HCT116 (cell line): ENCODE measurements at regions of chr15 and their contacts with region 1.

Region 1: DNA sequence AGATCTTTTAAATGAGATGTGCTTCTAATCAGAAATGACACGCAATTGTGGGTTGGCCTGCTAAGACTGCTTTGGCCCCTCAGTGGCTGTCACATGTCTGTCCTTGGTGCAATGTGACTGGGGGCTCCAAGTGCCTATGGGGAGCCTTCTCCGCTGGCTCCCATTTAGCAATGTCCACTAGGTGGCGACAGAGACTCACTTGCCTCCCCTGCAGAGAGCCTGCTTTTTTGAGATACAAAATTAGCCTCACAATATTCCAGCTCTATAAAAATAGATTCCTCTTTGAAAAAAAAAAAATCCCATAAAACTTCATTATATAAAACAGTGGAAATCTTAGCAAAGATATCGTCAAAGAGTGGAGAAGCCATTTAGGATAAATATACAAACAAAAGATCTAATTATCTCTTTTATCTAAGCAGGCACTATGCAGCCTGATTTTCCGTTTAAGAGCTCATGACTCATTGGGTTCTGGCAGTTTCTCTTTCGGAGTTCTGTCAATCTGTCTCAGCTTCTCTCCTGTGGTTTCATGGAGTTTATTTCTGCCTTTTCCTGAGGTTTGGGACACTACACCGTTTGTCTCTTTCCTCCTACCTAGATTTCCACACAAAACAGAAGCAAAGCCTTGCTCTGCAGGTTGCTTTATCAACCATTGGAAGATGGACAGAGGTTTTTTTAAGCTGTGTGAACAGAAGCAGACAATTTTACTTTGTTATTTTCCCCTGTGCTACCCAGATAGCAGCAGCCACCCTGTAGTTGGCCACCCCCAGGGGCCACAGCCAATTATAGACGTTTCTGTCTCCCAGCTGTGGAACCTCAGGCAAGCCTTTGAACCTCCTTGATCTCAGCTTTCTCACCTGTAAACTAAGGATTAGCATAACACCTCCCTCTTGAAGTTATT is 68.4 kb upstream of the TNFAIP8L3 start:
- DNase-seq: peak; percentile 33
- ATAC-seq: peak; percentile 96
- H3K4me3 ChIP-seq: no peak overlapping the region
- H3K27ac ChIP-seq: no peak overlapping the region
- H3K4me1 ChIP-seq: peaks cover 8% of the 10 kb centered on the region in 2 experiments
- H3K27me3 ChIP-seq: no peaks in the 10 kb centered on the region
- CTCF ChIP-seq: peak; percentile 82 to 96 (median 96)
- POLR2A ChIP-seq: no peak
- RAD21 ChIP-seq: peak; percentile 82

Region 2: DNA sequence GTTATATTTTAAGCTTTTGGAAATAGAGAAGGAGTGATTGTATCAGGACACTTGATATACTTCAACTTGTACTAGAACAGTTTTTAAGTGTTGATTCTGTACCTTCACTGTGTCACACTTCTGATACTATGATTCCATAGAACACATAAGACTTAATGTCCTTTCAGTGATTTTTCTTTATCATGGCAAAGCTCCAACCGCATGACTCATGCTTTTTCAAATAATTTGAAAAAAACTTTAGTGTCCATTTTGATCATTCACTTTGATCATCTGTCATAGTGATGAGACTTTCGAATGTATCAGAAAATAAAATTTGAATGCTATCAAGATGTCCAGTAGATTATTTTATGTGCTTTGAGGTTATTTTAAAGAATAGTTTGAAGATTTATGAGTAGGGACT is 222.6 kb before region 1 on chr15:
- CTCF ChIA-PET with region 1: no interaction called
- POLR2A ChIA-PET with region 1: no interaction called
- RAD21 ChIA-PET with region 1: no interaction called
- intact Hi-C with region 1: no loop called
- DNase-seq: no peak
- ATAC-seq: no peak
- H3K4me3 ChIP-seq: no peak overlapping the region
- H3K27ac ChIP-seq: no peak overlapping the region
- H3K4me1 ChIP-seq: peaks cover 2 to 3% of the 10 kb centered on the region in 2 experiments; a peak in 1 of 4 replicates
- H3K27me3 ChIP-seq: no peaks in the 10 kb centered on the region
- CTCF ChIP-seq: no peak
- POLR2A ChIP-seq: no peak
- RAD21 ChIP-seq: no peak

Region 3: DNA sequence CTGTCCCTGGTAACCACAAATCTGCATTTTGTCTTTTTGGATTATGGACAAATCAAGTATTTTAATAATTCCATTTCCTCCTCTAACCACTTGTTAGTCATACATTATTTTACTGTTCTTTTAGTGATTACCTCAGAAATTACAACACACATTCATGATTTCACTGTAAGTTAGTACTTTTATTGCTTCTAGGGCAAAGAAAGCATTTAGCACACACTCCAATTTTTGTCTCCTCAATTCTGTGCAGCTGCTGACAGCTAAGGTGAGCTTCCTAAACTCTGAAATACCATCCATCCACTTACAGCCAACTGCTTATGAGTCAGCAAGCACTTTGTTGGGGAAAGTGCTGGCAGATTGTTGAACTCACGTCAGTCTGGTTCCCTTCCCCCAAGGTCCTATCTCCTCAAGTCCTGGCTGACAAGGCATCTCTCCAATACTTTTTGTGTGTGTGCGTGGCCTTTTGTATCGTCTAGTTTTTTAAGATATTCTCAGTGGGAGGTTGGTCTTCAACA is 19.0 kb before region 1 on chr15:
- CTCF ChIA-PET with region 1: interaction called, 11 read pairs
- POLR2A ChIA-PET with region 1: no interaction called
- RAD21 ChIA-PET with region 1: no interaction called
- intact Hi-C with region 1: no loop called
- DNase-seq: peak; percentile 34
- ATAC-seq: peak; percentile 70
- H3K4me3 ChIP-seq: 0 out of 4 replicates have a peak overlapping the region, but pooled peaks of 1 of the 2 experiments have one; percentile 14
- H3K27ac ChIP-seq: no peak overlapping the region
- H3K4me1 ChIP-seq: peaks cover 4 to 11% of the 10 kb centered on the region in 2 experiments; a peak in 3 of 4 replicates
- H3K27me3 ChIP-seq: no peaks in the 10 kb centered on the region
- CTCF ChIP-seq: no peak
- POLR2A ChIP-seq: no peak
- RAD21 ChIP-seq: no peak

Region 4: GRCh38 chr15:51281368-51281967 is 118.4 kb after region 1 on chr15:
- CTCF ChIA-PET with region 1: interaction called, 10 read pairs
- POLR2A ChIA-PET with region 1: no interaction called
- RAD21 ChIA-PET with region 1: no interaction called
- intact Hi-C with region 1: loop called (anchors 10 kb)
- DNase-seq: peak; percentile 22
- ATAC-seq: peak; percentile 99
- H3K4me3 ChIP-seq: no peak overlapping the region
- H3K27ac ChIP-seq: no peak overlapping the region
- H3K4me1 ChIP-seq: no peaks in the 10 kb centered on the region
- H3K27me3 ChIP-seq: peaks cover 5% of the 10 kb centered on the region; the same call in 1 of the 2 replicates
- CTCF ChIP-seq: peak; percentile 50 to 78 (median 72); a peak in 5 of 6 replicates
- POLR2A ChIP-seq: no peak
- RAD21 ChIP-seq: peak; percentile 65

Region 5: DNA sequence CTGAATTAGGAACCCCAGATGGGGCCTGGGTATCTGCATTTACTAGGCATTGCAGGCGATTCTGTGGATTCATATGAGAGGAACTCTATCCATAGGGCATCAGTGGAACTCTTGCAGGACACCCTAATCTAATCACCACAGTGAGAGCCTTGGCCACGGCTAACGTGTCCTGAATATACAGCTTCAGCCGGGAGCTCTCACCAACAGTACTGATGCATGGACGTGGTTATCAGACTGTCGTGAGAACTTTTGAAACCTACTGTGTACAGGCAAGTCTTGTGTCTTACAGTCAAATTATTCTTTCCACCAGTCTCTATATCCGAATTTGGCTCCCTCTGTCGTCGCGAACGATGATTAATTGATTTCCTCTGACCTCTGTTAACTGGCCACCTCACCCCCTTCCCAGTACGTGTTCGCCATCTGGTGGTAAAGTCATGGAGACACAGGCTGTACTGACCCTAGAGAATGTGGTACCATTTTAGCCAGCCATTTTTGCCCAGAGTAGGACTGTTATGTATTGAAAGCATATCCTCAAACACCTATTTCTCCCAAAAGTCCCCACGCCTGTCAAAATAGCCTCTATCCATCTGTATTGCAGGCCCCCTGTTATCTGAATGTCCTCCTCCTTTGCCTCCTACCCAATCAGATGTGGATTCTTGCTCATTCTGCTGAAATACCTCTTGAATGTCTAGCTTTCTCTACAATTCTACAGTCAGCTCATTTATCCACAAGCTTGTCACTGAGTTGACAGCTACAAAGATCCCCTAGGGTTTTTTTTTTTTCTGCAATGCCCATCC is 218.1 kb after region 1 on chr15:
- CTCF ChIA-PET with region 1: interaction called, 38 read pairs
- POLR2A ChIA-PET with region 1: no interaction called
- RAD21 ChIA-PET with region 1: interaction called in 1 of 2 experiments, 5 read pairs
- intact Hi-C with region 1: loop called (anchors 1 kb)
- DNase-seq: peak; percentile 61
- ATAC-seq: peak; percentile 97
- H3K4me3 ChIP-seq: no peak overlapping the region
- H3K27ac ChIP-seq: no peak overlapping the region
- H3K4me1 ChIP-seq: no peaks in the 10 kb centered on the region
- H3K27me3 ChIP-seq: no peaks in the 10 kb centered on the region
- CTCF ChIP-seq: peak; percentile 89 to 98 (median 98)
- POLR2A ChIP-seq: no peak
- RAD21 ChIP-seq: peak; percentile 97

Region 6: DNA sequence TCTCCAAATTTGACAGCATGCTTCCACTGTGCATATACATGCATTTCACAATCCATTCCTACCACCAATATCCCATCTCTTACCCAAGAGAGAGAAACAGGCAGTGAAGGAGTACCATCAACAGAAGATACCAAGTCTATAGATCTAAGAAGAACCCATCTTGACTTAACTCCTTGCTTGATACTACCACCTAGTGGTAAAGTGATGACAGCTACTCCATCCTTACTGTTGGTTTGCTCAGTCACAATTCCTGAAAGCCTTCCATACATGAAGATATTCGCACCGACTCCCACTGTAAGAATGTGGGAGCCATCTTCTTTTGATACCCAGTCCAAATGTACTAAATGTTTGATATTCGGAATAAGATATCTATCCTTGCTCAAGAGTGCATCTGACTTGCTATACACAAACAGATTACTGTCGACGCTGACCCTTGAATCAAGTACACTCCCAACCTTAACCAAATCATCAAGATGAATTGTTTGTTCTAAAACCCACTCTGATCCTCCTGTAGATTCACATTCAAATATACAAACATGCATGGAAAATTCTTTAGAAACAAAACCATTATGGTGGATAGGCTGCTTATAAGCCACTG is 336.4 kb after region 1 on chr15:
- CTCF ChIA-PET with region 1: interaction called, 6 read pairs
- POLR2A ChIA-PET with region 1: no interaction called
- RAD21 ChIA-PET with region 1: interaction called in 1 of 2 experiments, 6 read pairs
- intact Hi-C with region 1: loop called (anchors 5 kb)
- DNase-seq: peak; percentile 50
- ATAC-seq: peak; percentile 95
- H3K4me3 ChIP-seq: no peak overlapping the region
- H3K27ac ChIP-seq: no peak overlapping the region
- H3K4me1 ChIP-seq: peaks cover 0 to 7% of the 10 kb centered on the region in 2 experiments; a peak in 2 of 4 replicates
- H3K27me3 ChIP-seq: no peaks in the 10 kb centered on the region
- CTCF ChIP-seq: peak; percentile 40 to 78 (median 73); a peak in 5 of 6 replicates
- POLR2A ChIP-seq: no peak
- RAD21 ChIP-seq: peak; percentile 74